ENCODE measurements at regions of chrX and their contacts with region 1.

Region 1: GRCh38 chrX:116204932-116205331 is 34.4 kb downstream of the AGTR2 start:
- DNase-seq: no peak

Region 2: DNA sequence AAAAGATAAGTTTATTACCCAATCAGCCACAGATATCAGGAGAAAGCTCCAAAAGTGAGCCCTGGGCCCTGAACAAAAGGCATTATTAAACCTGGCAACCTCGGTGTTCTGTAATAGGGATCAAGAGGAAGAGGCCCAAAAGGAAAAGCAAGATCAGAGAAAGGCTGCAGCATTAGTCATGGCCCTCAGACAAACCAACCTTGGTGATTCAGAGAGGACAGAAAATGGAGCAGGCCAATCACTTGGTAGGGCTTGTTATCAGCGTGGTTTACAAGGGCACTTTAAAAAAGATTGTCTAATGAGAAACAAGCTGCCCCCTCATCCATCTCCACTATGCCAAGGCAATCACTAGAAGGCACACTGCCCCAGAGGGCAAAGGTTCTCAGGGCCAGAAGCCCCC is 41.3 kb after region 1 on chrX:
- intact Hi-C with region 1: no loop called
- DNase-seq: no peak

Region 3: DNA sequence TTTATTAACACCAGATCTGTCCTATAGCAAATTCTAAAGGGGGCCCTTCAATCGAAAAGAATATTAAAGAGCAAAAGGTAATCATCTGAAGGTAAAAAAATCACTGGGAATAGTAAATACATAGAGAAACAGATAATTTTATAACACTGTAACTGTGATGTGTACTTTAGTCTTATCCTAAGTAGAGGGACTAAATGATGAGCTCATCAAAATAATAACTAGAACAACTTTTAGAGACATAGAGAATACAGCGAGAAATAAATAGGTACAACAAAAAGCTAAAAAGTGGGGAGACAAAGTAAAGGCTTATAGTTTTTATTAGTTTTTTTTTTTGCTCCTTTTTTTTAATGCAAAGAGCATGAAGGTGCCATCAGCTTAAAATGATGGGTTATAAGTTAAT is 275.1 kb after region 1 on chrX:
- intact Hi-C with region 1: loop called in 1 of 2 experiments (anchors 10 kb)
- DNase-seq: no peak

Measured in posterior vena cava (tissue), 2 donors.